Stomach (tissue), 19 donors: ENCODE measurements at regions of chr1 and their contacts with region 1.

Region 1: GRCh38 chr1:235516862-235517446 is 12.7 kb upstream of the B3GALNT2 start:
- DNase-seq: no peak
- H3K4me3 ChIP-seq: no peak overlapping the region
- H3K27ac ChIP-seq: no peak overlapping the region
- H3K4me1 ChIP-seq: no peaks in the 10 kb centered on the region
- H3K27me3 ChIP-seq: no peaks in the 10 kb centered on the region
- CTCF ChIP-seq: no peak
- EP300 ChIP-seq: no peak
- POLR2A ChIP-seq: no peak

Region 2: GRCh38 chr1:235486321-235486720 is 30.6 kb before region 1 on chr1:
- intact Hi-C with region 1: no loop called
- DNase-seq: peak in 1 of 2 donors; percentile 17
- H3K4me3 ChIP-seq: no peak overlapping the region
- H3K27ac ChIP-seq: no peak overlapping the region
- H3K4me1 ChIP-seq: peaks cover 0 to 10% (median 0%) of the 10 kb centered on the region in 4 donors
- H3K27me3 ChIP-seq: no peaks in the 10 kb centered on the region
- CTCF ChIP-seq: no peak
- EP300 ChIP-seq: no peak
- POLR2A ChIP-seq: no peak

Region 3: GRCh38 chr1:235739124-235739523 is 222.2 kb after region 1 on chr1:
- intact Hi-C with region 1: no loop called
- DNase-seq: peak in 1 of 2 donors; percentile 37
- H3K4me3 ChIP-seq: no peak overlapping the region
- H3K27ac ChIP-seq: no peak overlapping the region
- H3K4me1 ChIP-seq: peaks cover 0 to 7% (median 0%) of the 10 kb centered on the region in 4 donors
- H3K27me3 ChIP-seq: no peaks in the 10 kb centered on the region
- CTCF ChIP-seq: no peak
- EP300 ChIP-seq: no peak
- POLR2A ChIP-seq: no peak

Region 4: GRCh38 chr1:235968831-235969230 is 451.9 kb after region 1 on chr1:
- intact Hi-C with region 1: loop called (anchors 5 kb)
- DNase-seq: no peak
- H3K4me3 ChIP-seq: no peak overlapping the region
- H3K27ac ChIP-seq: no peak overlapping the region
- H3K4me1 ChIP-seq: peaks cover 0 to 23% (median 18%) of the 10 kb centered on the region in 4 donors
- H3K27me3 ChIP-seq: no peaks in the 10 kb centered on the region
- CTCF ChIP-seq: no peak
- EP300 ChIP-seq: no peak
- POLR2A ChIP-seq: no peak